Activated B cell treated with CpG ODN at 0.5 μM for 24 hours (primary cell): ENCODE measurements at regions of chr10 and their contacts with region 1.

Region 1: DNA sequence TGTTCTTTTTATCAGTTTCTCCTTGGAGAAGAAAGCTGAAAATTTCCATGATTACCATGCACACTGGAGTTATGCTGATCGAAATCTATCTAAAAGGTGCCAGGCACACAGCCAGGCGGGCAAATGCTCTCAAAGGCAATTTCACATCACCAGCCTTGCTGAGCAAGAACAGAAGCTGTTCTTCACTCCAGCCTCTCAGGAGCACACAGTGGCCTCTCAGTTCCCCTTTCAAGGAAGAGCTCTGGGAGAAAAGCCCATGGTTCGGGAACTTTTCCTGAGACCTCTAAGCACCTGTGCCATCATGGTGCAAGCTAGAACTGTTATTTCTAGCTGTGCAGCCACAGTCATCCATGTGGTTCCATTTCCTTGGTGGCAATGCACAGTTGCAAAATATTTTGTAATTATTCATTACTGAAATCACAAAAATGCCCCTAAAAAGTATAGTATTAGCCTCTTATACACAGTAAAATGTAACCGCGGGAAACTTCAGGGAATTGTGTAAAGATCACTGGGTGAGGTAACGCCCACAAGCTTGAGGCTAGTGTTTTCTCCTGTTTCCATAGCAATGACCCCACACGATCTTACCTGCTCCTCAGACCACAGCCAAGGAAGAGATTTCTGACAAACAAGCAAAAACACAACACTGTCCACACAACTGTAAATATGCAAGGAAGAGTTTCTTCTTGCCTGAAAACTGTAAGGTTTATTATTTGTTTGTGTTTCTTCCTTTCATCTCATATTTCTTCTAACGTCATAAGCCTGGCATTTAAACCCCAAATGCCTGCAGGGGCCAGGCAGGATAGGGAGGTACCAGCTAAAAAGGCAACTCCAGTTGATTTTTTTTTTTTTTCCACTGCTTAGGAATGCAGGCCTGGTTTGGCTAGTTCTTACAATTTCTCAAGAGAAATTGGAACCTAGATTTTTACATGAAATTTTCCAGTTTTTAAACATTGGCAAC is 121.1 kb downstream of the FAM107B start:
- DNase-seq: no peak
- ATAC-seq: peak; percentile 5
- H3K4me3 Mint-ChIP-seq: peak overlapping the region; percentile 16
- H3K27ac Mint-ChIP-seq: peak overlapping the region; percentile 71
- H3K4me1 Mint-ChIP-seq: peaks cover 82% of the 10 kb centered on the region
- H3K27me3 Mint-ChIP-seq: no peaks in the 10 kb centered on the region
- CTCF ChIP-seq: no peak

Region 2: DNA sequence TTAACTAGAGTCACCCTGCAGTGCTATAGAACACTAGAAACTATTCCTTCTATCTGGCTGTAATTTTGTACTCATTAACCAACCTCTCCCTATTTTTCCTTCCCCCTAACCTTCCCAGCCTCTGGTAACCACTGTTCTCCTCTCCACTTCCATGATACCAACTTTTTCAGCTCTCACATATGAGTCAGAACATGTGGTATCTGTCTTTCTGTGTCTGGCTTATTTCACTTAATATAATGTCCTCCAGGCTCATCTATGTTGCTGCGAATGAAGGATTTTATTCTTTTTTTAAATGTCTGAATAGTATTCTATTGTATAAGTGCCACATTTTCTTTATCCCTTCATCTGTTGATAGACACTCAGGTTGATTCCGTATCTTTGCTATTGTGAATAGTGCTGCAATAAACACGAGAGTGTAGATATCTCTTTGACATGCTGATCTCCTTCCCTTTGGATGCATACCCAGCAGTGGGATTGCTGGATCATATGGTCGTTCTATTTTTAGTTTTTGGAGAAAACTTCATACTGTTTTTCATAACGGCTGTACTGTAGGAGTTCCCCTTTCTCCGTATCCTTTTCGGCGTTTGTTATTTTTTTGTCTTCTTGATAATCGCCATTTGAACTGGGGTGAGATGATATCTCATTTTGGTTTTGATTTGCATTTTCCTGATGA is 19.8 kb after region 1 on chr10:
- CTCF ChIA-PET with region 1: no interaction called
- POLR2A ChIA-PET with region 1: interaction called, 3 read pairs
- intact Hi-C with region 1: loop called (anchors 2 kb)
- DNase-seq: no peak
- ATAC-seq: no peak
- H3K4me3 Mint-ChIP-seq: peak overlapping the region; percentile 77
- H3K27ac Mint-ChIP-seq: peak overlapping the region; percentile 32
- H3K4me1 Mint-ChIP-seq: peaks cover 25% of the 10 kb centered on the region
- H3K27me3 Mint-ChIP-seq: no peaks in the 10 kb centered on the region
- CTCF ChIP-seq: no peak

Region 3: GRCh38 chr10:14688606-14689005 is 35.1 kb after region 1 on chr10:
- CTCF ChIA-PET with region 1: no interaction called
- POLR2A ChIA-PET with region 1: interaction called, 11 read pairs
- intact Hi-C with region 1: no loop called
- DNase-seq: no peak
- ATAC-seq: no peak
- H3K4me3 Mint-ChIP-seq: no peak overlapping the region
- H3K27ac Mint-ChIP-seq: no peak overlapping the region
- H3K4me1 Mint-ChIP-seq: peaks cover 3% of the 10 kb centered on the region
- H3K27me3 Mint-ChIP-seq: no peaks in the 10 kb centered on the region
- CTCF ChIP-seq: no peak

Region 4: GRCh38 chr10:14844948-14845347 is 191.4 kb after region 1 on chr10:
- CTCF ChIA-PET with region 1: no interaction called
- POLR2A ChIA-PET with region 1: no interaction called
- intact Hi-C with region 1: no loop called
- DNase-seq: no peak
- ATAC-seq: no peak
- H3K4me3 Mint-ChIP-seq: no peak overlapping the region
- H3K27ac Mint-ChIP-seq: no peak overlapping the region
- H3K4me1 Mint-ChIP-seq: peaks cover 3% of the 10 kb centered on the region
- H3K27me3 Mint-ChIP-seq: no peaks in the 10 kb centered on the region
- CTCF ChIP-seq: no peak